ENCODE measurements at regions of chr12 and their contacts with region 1.

Region 1: GRCh38 chr12:82685790-82686167 is 927 bp upstream of the TMTC2 start:
- DNase-seq: peak; percentile 96
- ATAC-seq: peak; percentile 87

Region 2: GRCh38 chr12:82572354-82572753 is 113.4 kb before region 1 on chr12:
- intact Hi-C with region 1: no loop called
- DNase-seq: no peak
- ATAC-seq: no peak

Region 3: DNA sequence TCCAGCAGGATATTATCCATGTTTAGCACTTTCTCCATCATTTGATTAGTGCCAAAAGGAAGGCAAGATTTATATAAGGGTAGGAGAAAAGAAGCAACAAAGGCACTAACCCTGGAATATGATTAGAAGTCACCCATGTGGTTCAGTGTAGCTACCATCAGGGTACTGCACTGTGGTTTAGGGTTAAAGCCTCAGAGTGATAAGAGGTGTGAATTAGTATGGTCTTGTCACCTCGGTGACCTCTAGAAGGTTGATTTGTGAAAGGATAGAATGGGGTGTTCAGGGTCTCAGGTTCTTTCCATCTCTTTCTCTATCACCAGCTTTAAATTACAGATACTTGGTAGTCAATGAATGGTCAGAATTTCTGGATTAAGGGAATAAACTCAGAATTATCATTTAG is 102.0 kb before region 1 on chr12:
- intact Hi-C with region 1: no loop called
- DNase-seq: no peak
- ATAC-seq: no peak

Region 4: GRCh38 chr12:82793751-82794281 is 108.0 kb after region 1 on chr12:
- intact Hi-C with region 1: no loop called
- DNase-seq: no peak
- ATAC-seq: no peak

Region 5: GRCh38 chr12:83823431-83823963 is 1137.7 kb after region 1 on chr12:
- intact Hi-C with region 1: loop called (anchors 10 kb)
- DNase-seq: peak; percentile 40
- ATAC-seq: peak; percentile 82

Measured in left ventricle myocardium superior (tissue), 1 donor.